Activated B cell treated with CpG ODN at 0.5 μM for 24 hours (primary cell): ENCODE measurements at regions of chr6 and their contacts with region 1.

Region 1: GRCh38 chr6:87210979-87211378 is 55.6 kb downstream of the ZNF292 start:
- DNase-seq: no peak
- ATAC-seq: peak; percentile 92
- H3K4me3 Mint-ChIP-seq: no peak overlapping the region
- H3K27ac Mint-ChIP-seq: no peak overlapping the region
- H3K4me1 Mint-ChIP-seq: peaks cover 58% of the 10 kb centered on the region
- H3K27me3 Mint-ChIP-seq: no peaks in the 10 kb centered on the region
- CTCF ChIP-seq: no peak

Region 2: GRCh38 chr6:87054143-87054833 is 156.7 kb before region 1 on chr6:
- CTCF ChIA-PET with region 1: no interaction called
- POLR2A ChIA-PET with region 1: no interaction called
- intact Hi-C with region 1: no loop called
- DNase-seq: no peak
- ATAC-seq: peak; percentile 50
- H3K4me3 Mint-ChIP-seq: peak overlapping the region; percentile 67
- H3K27ac Mint-ChIP-seq: peak overlapping the region; percentile 79
- H3K4me1 Mint-ChIP-seq: peaks cover 42% of the 10 kb centered on the region
- H3K27me3 Mint-ChIP-seq: no peaks in the 10 kb centered on the region
- CTCF ChIP-seq: no peak

Region 3: DNA sequence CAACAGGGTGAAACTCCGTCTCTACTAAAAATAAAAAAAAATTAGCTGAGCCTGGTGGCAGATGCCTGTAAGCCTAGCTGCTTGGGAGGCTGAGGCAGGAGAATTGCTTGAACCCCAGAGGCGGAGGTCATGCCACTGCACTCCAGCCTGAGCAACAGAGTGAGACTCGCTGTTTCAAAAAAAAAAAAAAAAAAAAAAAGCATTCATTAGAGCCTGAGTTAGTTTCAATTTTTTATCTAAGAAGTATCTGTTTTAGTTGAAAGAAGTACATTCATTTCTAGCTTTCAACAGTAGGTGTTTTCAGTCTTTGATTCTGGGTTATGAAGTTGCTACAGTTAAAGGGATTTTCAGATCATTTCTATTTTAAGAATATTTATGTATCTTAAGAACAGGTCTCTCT is 13.4 kb before region 1 on chr6:
- CTCF ChIA-PET with region 1: no interaction called
- POLR2A ChIA-PET with region 1: interaction called, 4 read pairs
- intact Hi-C with region 1: loop called (anchors 2 kb)
- DNase-seq: no peak
- ATAC-seq: no peak
- H3K4me3 Mint-ChIP-seq: no peak overlapping the region
- H3K27ac Mint-ChIP-seq: no peak overlapping the region
- H3K4me1 Mint-ChIP-seq: peaks cover 59% of the 10 kb centered on the region
- H3K27me3 Mint-ChIP-seq: no peaks in the 10 kb centered on the region
- CTCF ChIP-seq: no peak

Region 4: DNA sequence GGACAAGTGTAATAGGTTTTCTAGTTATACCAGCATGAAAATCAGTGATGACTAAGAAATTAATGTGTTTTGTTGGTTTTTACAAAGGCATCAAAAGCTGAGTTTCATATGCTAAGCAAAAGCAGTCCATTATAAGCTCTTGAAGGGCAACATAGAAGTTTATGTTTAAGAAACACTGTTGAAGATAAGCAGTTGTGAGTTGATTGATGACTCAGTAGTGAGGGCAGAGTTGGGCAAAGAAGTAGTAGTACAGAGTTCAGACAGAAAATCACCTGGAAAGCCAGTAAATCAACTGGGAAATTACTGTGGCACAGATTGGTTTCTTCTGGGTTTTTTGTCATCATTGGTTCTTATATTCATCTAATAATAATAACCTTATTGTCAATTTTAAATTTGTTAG is 33.4 kb after region 1 on chr6:
- CTCF ChIA-PET with region 1: no interaction called
- POLR2A ChIA-PET with region 1: no interaction called
- intact Hi-C with region 1: no loop called
- DNase-seq: no peak
- ATAC-seq: no peak
- H3K4me3 Mint-ChIP-seq: no peak overlapping the region
- H3K27ac Mint-ChIP-seq: no peak overlapping the region
- H3K4me1 Mint-ChIP-seq: no peaks in the 10 kb centered on the region
- H3K27me3 Mint-ChIP-seq: no peaks in the 10 kb centered on the region
- CTCF ChIP-seq: no peak